Posterior vena cava (tissue), 2 donors: ENCODE measurements at regions of chr3 and their contacts with region 1.

Region 1: DNA sequence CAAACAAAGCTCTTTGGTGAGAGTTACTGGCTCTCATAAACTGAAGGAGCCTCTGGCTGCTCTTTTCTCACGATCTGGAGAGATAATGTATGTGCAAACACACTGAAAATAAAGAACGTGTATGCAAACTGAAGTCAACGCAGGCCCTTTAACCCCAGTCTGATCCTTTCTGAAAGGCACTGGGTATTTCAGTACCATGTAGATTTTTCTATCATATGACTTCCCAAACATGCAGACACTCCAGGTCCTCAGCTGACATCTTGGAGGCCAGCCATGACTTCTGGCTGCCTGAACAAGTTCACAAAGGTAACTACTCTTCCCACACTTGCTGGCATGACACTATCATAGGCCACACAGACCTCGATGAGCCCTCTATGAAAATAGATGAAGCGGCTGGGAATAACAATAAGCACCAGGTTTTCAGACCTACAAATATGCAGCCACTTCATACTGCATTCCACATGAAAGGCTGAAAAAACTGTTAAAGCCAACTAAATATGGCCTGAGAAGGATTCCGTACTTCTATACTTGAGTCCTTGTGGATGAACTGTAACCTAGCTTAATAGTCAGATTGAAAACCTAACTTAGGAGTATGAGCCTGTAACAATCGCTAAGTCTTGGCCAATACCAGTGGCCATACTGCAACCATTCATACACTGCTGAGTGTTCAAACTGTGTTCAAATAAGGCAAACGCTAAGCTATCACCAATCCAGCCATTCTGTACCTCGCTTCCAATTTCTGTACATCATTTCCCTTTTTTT is 121.3 kb downstream of the THRB start:
- DNase-seq: no peak

Region 2: DNA sequence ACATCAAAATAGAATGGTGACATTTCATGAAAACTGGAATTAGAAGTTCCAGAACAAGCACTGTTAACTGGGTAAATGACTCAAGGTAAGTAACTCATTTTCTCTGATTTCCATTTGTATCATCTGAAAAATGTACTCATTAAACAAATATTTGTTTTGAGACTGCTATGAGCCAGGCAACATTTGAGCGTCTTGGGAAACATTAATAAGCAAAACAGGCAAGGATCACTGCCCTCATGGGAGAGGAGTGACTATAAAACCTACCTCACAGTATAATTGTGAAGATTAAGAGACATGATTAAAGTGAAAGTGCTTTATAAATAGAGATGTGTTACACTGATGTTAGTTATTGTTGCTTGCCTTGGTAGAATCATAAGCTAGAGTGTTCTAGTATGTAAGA is 1882.0 kb before region 1 on chr3:
- intact Hi-C with region 1: loop called in 1 of 2 experiments (anchors 5 kb)
- DNase-seq: no peak

Region 3: GRCh38 chr3:24201301-24201700 is 172.1 kb before region 1 on chr3:
- intact Hi-C with region 1: no loop called
- DNase-seq: no peak

Region 4: GRCh38 chr3:24264748-24265158 is 108.6 kb before region 1 on chr3:
- intact Hi-C with region 1: no loop called
- DNase-seq: no peak